ENCODE measurements at regions of chr18 and their contacts with region 1.

Region 1: DNA sequence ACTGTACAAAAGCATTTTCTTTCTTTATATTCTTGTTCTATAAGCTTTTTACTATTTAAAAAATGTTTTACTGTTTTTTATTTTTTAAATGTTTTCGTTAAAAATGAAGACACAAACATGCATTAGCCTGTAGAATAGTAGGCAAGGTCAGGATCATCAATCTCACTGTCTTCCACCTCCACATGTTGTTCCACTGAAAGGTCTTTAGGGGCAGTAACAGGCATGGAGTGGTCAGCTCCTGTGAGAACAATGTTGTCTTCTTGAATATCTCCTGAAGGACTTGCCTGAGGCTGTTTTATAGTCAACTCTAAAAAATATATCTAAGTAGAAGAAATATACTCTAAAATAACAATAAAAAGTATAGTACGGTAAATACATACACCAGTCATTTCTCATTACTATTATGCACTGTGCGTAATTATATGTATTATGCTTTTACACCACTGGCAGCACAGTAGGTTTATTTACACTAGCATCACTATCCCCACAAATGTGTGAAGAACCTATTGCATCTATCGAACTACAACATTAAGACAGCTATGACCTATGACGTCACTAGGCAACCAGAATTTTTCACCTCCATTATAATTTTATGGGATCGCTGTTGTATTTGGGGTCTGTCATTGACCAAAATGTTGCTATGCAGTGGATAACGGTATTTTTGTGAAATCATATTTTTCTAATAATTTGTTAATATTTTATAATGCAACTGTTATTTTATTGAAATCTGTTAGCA is 764.3 kb downstream of the METTL4 start:
- DNase-seq: no peak
- ATAC-seq: no peak
- H3K4me3 ChIP-seq: no peak overlapping the region
- H3K27ac ChIP-seq: no peak overlapping the region
- H3K4me1 ChIP-seq: no peaks in the 10 kb centered on the region
- H3K27me3 ChIP-seq: no peaks in the 10 kb centered on the region
- CTCF ChIP-seq: no peak; the same call in 1 of the 2 replicates

Region 2: GRCh38 chr18:1253827-1254226 is 553.2 kb before region 1 on chr18:
- CTCF ChIA-PET with region 1: no interaction called
- POLR2A ChIA-PET with region 1: no interaction called
- in situ Hi-C with region 1: no loop called
- intact Hi-C with region 1: no loop called
- DNase-seq: no peak
- ATAC-seq: no peak
- H3K4me3 ChIP-seq: no peak overlapping the region
- H3K27ac ChIP-seq: no peak overlapping the region
- H3K4me1 ChIP-seq: no peaks in the 10 kb centered on the region
- H3K27me3 ChIP-seq: no peaks in the 10 kb centered on the region
- CTCF ChIP-seq: no peak

Region 3: GRCh38 chr18:2636126-2636631 is 829.1 kb after region 1 on chr18:
- CTCF ChIA-PET with region 1: no interaction called
- POLR2A ChIA-PET with region 1: interaction called, 10 read pairs
- in situ Hi-C with region 1: no loop called
- intact Hi-C with region 1: no loop called
- DNase-seq: no peak
- ATAC-seq: no peak
- H3K4me3 ChIP-seq: no peak overlapping the region
- H3K27ac ChIP-seq: no peak overlapping the region
- H3K4me1 ChIP-seq: no peaks in the 10 kb centered on the region
- H3K27me3 ChIP-seq: no peaks in the 10 kb centered on the region
- CTCF ChIP-seq: no peak